G401 (cell line): ENCODE measurements at regions of chr11 and their contacts with region 1.

Region 1: GRCh38 chr11:43573233-43573632 is 107.3 kb upstream of the HSD17B12 start:
- DNase-seq: peak; percentile 47

Region 2: DNA sequence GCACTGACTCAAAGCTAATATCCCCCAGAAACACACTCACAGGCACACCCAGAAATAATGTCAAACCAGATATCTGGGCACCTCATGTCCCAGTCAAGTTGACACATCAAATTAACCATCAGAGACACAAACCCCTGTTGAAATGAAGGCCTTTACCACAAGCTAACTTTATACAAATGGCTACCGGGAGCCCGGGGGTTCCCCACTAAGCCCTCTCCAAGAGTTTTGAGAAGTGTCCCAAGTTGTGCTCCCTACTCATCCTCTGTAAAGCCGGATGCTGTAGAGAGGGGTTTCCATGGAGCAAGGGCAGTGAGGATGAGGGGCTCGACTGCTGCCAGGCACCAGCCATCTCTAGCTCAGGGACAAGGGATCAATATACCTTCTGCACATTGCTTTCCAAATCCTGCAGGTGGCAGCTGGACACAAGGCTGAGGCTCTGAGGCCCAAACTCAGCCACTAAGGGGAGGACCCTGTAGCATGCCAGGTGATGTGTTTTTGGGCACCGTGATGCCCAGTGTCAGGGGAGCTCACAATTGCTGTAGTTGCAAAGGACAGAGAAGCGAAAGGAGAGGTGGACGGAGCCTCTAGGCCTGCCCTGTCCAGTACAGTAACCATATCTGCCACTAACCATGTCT is 68.8 kb before region 1 on chr11:
- in situ Hi-C with region 1: loop called (anchors 5 kb)
- DNase-seq: peak; percentile 71

Region 3: DNA sequence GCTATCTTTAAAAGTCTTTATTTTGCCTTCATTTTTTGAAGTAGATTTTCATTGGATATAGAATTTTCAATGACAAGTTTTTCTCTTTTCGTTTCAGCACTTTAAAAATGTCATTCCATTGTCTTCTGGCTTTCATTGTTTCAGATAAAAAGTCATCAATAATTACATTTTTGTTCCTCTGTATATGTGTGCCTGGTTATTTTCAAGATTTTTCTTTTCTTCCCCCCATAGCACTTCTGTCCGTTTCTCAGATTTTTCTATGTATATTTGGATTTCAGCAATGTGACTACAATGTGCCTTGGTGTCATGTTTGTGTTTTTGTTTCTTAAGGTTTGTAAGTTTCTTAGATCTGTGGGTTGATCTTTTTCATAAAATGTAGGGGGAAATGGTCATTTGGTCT is 41.0 kb after region 1 on chr11:
- in situ Hi-C with region 1: no loop called
- DNase-seq: no peak